ENCODE measurements at regions of chr10 and their contacts with region 1.

Region 1: DNA sequence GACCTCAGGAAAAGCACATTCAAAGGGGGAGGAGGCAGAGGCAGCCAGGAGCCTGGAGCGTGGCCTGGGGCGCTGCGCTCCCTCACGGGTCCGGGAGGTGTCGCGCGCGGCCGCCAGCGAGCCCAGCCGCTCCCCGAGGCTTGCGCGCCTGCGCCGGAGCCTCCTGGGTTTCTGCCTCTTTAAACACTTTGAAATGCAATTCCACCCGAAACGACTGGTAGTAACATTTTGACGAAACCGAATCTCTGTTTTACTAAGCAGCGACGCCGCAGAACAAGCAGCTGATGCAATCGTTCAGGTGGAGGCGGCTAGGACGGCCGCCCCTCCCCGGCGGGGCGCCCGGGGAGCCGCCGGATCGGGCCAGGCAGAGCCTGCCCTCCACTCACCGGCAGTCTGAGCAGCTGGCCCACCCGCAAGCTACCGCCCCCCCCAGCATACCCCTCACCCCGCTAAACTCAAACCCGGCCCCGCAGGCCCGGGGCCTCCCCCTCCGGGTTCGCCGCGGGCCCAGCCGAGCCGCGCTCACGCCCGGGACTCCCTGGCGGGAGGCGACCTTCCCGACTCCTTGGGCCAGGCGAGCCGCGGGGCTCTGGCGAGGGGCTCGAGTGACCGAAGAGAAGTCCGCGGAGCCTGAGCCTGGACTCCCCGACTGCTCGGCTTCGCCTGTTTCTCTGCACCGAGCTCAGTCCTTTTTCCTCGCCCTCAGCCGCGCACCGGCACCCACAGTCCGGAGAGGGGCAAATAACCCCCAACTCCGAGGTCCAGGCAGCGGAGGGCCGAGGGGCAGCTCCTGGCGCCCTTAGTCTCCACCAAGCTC is 3.2 kb downstream of the MKX start:
- DNase-seq: peak; percentile 94
- H3K4me3 Mint-ChIP-seq: peak overlapping the region; percentile 69
- H3K27ac Mint-ChIP-seq: peak overlapping the region; percentile 29
- H3K4me1 Mint-ChIP-seq: peaks cover 20% of the 10 kb centered on the region
- H3K27me3 Mint-ChIP-seq: peaks cover 67% of the 10 kb centered on the region

Region 2: DNA sequence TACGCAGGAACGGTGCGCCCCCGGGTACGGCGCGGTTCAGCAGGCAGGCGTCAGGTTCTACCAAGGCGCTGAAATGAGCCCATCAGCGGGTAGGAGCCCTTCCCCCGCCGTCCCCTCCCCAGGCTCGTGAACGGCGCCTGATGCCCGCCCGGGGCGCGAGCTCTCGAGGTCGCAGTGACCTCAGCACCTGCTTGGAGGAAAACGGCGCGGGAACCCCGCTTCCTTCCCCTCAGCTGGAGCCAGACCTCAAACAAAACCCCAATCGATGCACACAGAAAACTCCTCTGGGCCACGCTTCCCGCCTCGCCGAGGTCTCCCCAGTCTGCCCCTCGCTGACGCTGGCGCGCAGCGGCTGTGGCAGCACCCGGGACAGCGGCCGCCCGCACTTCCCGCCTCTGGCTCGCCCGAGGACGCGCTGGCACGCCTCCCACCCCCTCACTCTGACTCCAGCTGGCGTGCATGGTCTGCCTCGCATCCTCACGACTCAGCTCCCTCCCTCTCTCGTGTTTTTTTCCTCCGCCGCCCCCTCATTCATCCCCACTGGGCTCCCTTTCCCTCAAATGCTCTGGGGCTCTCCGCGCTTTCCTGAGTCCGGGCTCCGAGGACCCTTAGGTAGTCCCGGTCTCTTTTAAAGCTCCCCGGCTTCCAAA is 1526.3 kb before region 1 on chr10:
- intact Hi-C with region 1: loop called (anchors 5 kb)
- DNase-seq: peak; percentile 66
- H3K4me3 Mint-ChIP-seq: peak overlapping the region; percentile 58
- H3K27ac Mint-ChIP-seq: peak overlapping the region; percentile 16
- H3K4me1 Mint-ChIP-seq: peaks cover 13% of the 10 kb centered on the region
- H3K27me3 Mint-ChIP-seq: peaks cover 87% of the 10 kb centered on the region

Region 3: DNA sequence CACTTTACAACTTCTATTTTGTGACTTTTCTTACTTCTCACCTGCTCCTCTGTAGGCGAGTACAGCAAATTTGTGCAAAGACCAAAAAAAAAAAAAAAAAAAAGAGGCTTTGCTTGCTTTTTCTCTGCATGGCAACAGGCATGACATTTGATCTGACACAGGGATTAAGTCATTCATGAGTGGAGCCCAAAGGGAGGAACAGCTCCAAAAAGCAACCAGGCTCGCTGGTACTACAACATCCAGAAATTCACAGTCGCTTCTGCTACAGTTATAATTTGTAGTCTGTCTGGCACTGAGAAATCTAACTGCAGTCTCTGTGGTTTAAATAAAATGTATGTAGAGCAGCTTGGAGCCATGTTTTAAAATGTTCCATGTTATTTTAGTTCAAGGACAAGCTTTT is 28.5 kb before region 1 on chr10:
- intact Hi-C with region 1: no loop called
- DNase-seq: no peak
- H3K4me3 Mint-ChIP-seq: no peak overlapping the region
- H3K27ac Mint-ChIP-seq: no peak overlapping the region
- H3K4me1 Mint-ChIP-seq: no peaks in the 10 kb centered on the region
- H3K27me3 Mint-ChIP-seq: peaks cover 7% of the 10 kb centered on the region

Region 4: GRCh38 chr10:27838361-27838760 is 96.0 kb after region 1 on chr10:
- intact Hi-C with region 1: no loop called
- DNase-seq: no peak
- H3K4me3 Mint-ChIP-seq: no peak overlapping the region
- H3K27ac Mint-ChIP-seq: no peak overlapping the region
- H3K4me1 Mint-ChIP-seq: no peaks in the 10 kb centered on the region
- H3K27me3 Mint-ChIP-seq: no peaks in the 10 kb centered on the region

Region 5: DNA sequence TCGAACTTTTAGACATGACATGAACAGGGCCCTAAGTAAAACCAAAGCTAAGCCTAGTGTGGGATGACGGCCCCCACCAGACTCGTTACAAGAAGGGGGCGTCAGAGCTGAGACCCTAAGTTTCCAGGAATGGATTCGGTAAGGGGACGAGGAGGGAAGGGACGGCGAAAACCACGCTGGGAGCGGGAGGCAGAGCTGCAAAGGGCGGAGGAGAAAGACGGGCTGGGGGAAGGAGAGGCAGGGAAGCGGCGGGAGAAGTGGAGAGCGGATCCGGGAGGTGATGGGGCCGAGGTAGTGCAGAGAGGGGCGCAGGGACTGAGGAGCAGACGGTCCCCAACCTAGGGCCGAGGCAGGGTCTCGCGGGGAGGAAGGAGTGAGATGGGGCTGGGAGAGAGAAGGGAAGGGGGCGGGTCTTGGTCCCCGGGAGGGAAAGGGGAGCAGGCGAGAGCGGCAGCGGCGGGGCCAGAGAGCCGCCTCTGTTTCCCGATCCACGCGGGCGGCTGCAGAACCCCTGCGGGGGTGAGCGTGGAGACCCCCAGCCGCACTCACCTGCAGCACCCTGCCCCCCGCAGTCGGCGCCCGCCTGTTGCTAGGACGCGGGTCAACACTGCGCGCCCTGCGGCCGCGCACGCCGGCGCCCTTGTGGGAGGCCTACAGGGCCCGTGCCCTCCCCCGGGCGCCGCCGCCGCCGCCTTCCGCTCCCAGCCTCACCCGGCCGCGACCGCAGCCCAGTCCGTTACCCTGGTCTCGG is 256.0 kb after region 1 on chr10:
- intact Hi-C with region 1: loop called (anchors 10 kb)
- DNase-seq: peak; percentile 59
- H3K4me3 Mint-ChIP-seq: peak overlapping the region; percentile 79
- H3K27ac Mint-ChIP-seq: no peak overlapping the region
- H3K4me1 Mint-ChIP-seq: peaks cover 12% of the 10 kb centered on the region
- H3K27me3 Mint-ChIP-seq: peaks cover 51% of the 10 kb centered on the region

Region 6: DNA sequence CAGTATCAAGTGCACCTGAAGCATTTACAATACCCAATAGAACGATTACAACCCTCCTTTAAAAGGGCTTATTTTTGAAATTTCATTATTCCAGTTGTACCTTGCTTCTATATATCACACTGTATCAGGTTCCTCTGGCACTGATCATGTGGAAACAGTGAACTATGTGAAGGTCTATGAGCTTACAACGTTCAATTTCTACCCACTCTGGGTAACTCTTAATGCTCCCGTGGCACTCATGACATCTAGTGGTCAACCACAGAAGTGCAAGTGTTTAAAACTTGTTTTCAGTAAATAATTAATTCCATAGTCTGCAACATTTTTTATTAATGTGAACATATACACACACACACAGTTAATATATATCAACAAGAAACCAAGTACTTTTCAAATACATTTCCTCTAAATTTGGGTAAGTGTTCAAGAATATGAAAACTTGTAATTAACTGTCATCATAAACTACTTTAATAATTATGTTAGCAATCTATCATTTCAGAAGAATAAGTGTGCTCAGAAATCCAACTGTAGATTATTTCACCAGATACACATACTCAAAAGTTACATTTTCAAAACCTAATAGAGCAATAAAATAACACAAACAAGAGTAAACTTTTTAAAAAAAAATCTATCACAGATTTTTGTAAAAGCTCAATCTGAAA is 499.5 kb after region 1 on chr10:
- intact Hi-C with region 1: loop called (anchors 2 kb)
- DNase-seq: peak; percentile 80
- H3K4me3 Mint-ChIP-seq: no peak overlapping the region
- H3K27ac Mint-ChIP-seq: no peak overlapping the region
- H3K4me1 Mint-ChIP-seq: peaks cover 2% of the 10 kb centered on the region
- H3K27me3 Mint-ChIP-seq: peaks cover 3% of the 10 kb centered on the region

Region 7: DNA sequence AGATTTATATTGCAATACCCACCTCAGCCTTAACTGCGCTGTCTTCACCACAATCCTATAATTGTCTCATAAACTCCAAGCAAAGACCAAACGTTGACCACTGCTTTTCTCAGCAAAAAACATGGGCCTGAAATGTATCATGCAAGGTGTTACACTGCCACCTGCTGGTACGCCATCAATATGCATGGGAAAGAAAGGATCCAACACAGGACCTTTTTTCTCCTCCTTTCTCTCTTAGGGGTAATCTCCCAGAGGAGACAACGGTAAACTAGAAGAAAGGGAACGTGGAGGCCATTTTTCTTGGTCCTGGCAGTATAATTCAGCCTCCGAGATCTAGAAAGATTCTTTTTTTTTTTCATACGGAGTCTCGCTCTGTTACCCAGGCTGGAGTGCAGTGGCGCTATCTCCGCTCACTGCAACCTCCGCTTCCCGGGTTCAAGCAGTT is 639.5 kb after region 1 on chr10:
- intact Hi-C with region 1: loop called (anchors 1 kb)
- DNase-seq: peak; percentile 94
- H3K4me3 Mint-ChIP-seq: no peak overlapping the region
- H3K27ac Mint-ChIP-seq: peak overlapping the region; percentile 36
- H3K4me1 Mint-ChIP-seq: peaks cover 25% of the 10 kb centered on the region
- H3K27me3 Mint-ChIP-seq: peaks cover 12% of the 10 kb centered on the region